Transverse colon (tissue), 4 donors: ENCODE measurements at regions of chr10 and their contacts with region 1.

Region 1: GRCh38 chr10:92284112-92284704 is 6.7 kb downstream of the CPEB3 start:
- DNase-seq: no peak
- H3K4me3 ChIP-seq: peak overlapping the region in 1 of 4 donors; percentile 18
- H3K27ac ChIP-seq: peak overlapping the region; percentile 64 to 79 (median 72)
- H3K4me1 ChIP-seq: peaks cover 0 to 22% (median 2%) of the 10 kb centered on the region in 4 donors
- H3K27me3 ChIP-seq: no peaks in the 10 kb centered on the region
- CTCF ChIP-seq: no peak
- EP300 ChIP-seq: peak; percentile 62
- POLR2A ChIP-seq: no peak

Region 2: DNA sequence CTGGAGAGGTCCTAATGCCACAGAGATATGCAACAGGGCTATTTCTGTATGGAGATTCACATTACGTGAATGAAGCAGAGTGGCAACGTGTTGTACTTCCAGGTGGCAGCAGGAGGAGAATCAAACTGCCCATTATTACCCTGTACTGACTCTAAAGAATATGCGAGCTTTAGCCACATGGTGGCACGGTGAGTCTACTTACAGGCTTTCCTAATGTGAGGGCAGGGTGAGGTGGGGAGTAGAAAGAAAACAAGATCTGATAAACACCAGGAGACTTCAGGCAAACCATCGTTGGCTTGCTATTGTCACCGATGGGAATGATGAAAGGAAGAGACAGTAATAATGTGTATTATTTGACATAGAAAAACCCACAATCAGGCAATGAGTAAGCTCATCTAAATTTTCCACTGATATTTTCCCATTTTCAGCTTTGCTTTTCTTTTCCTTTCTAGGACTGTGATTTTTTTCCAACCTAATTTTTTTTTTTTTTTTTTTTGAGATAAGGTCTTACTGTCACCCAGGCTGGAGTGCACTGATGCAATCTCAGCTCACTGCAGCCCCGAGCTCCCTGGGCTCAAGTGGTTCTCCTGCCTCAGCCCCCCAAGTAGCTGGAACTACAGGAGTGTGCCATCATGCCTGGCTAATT is 196.3 kb before region 1 on chr10:
- in situ Hi-C with region 1: loop called in 1 of 4 experiments (anchors 10 kb)
- intact Hi-C with region 1: no loop called
- DNase-seq: peak; percentile 69
- H3K4me3 ChIP-seq: no peak overlapping the region
- H3K27ac ChIP-seq: no peak overlapping the region
- H3K4me1 ChIP-seq: peaks cover 0 to 3% (median 0%) of the 10 kb centered on the region in 4 donors
- H3K27me3 ChIP-seq: no peaks in the 10 kb centered on the region
- CTCF ChIP-seq: peak; percentile 68 to 93 (median 69)
- EP300 ChIP-seq: no peak
- POLR2A ChIP-seq: no peak

Region 3: DNA sequence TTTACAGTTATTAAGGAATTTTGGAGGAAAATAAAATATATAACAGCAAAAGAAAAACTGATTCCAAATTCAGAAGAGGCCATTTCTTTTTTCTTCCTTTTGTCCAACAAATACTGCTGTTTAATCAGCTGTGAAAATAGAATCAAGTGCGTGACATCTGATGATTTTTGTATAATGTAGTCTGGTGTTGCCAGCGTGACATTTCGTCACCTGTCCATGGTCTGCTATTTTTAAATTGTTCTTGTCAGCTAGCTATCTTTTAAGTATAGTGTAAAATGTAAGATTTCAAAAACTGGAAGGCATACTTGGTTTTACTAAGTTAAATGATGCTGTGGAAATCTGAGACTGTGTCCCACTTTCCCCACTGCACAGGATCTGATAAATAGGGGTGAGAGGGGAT is 99.2 kb before region 1 on chr10:
- in situ Hi-C with region 1: no loop called
- intact Hi-C with region 1: no loop called
- DNase-seq: no peak
- H3K4me3 ChIP-seq: no peak overlapping the region
- H3K27ac ChIP-seq: no peak overlapping the region
- H3K4me1 ChIP-seq: peaks cover 0 to 12% (median 5%) of the 10 kb centered on the region in 4 donors
- H3K27me3 ChIP-seq: no peaks in the 10 kb centered on the region
- CTCF ChIP-seq: no peak
- EP300 ChIP-seq: no peak
- POLR2A ChIP-seq: no peak